BJ (cell line): ENCODE measurements at regions of chr12 and their contacts with region 1.

Region 1: DNA sequence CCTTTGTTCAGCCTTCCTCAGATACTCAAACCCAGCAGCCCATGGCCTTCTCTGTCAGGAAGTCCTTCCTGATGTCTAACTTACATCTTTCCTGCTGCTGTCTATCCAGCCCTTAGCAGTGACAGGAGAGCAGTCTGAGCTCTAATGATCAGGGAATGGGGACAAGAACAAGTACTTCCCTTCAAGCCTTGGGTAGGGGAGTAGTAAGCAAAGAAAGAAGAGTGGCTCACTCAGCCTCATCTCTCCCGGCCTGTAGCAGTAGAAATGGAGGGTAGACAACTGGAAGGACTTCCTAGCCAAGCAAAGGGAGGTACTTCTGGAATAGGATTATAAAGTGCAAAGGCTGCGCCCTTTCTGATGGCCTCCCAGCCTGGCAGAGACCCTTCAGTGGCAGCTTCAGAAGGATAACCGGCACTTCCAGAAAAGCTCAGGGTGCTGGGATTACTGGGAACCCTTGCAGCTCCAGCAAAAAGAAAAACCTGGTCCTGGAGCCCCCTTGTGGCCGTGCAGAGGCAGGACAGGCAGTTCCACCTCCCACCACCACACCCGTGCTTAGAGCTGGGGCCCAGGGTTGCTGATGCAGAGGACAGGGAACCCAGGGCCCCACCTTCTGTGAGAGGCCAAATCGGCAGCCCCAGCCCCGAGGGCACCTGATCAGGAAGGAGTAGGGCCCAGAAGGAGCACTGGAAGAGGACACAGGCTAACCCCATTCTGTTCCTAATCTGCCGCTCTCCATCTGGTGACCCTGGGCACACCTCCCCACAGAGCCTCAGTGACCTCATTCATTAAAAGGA is 12.4 kb upstream of the SMUG1 start:
- DNase-seq: no peak
- H3K4me3 ChIP-seq: no peak overlapping the region
- H3K27me3 ChIP-seq: peaks cover 10% of the 10 kb centered on the region
- CTCF ChIP-seq: peak; percentile 96

Region 2: DNA sequence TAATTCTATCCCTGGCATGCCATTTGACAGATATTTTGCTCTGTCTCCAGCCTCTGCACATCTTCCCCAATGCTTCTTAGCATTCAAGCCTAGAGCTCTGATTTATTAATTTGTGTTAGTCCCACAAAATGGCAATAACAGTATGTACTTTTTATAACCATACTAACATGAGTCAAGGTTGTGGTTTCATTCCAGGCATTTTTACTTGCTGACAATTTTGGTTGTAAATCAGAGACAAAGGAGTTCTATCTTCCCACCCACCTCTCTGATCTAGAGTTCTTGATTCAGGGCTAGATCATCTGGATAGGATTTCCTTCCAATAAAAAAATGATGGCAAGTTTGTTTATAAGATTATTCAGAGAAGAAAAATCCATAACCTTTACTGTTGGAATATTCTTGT is 430.9 kb before region 1 on chr12:
- CTCF ChIA-PET with region 1: interaction called, 10 read pairs
- POLR2A ChIA-PET with region 1: no interaction called
- DNase-seq: peak; percentile 96
- H3K4me3 ChIP-seq: no peak overlapping the region
- H3K27me3 ChIP-seq: no peaks in the 10 kb centered on the region
- CTCF ChIP-seq: no peak

Region 3: DNA sequence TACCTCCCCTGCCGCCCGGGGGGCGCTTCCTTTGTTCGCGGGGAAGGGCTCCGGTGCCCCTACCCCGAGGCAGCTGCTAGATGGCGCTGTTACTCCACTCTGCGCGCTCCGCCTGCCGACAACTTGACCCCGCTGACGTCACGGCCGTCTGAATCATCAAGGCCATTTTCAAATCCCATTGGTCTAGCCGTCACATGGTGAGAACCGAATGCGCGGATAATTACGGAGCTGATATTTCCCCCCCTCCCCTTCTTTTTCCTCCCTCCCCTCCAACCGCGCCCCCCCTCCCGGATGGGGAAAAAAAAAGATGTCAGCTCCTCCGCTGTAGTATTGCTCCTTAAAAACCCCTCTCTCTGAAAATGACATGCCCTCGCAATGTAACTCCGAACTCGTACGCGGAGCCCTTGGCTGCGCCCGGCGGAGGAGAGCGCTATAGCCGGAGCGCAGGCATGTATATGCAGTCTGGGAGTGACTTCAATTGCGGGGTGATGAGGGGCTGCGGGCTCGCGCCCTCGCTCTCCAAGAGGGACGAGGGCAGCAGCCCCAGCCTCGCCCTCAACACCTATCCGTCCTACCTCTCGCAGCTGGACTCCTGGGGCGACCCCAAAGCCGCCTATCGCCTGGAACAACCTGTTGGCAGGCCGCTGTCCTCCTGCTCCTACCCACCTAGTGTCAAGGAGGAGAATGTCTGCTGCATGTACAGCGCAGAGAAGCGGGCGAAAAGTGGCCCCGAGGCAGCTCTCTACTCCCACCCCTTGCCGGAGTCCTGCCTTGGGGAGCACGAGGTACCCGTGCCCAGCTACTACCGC is 216.1 kb before region 1 on chr12 and contains the start of gene HOXC10:
- CTCF ChIA-PET with region 1: interaction called, 90 read pairs
- POLR2A ChIA-PET with region 1: interaction called, 4 read pairs
- DNase-seq: no peak
- H3K4me3 ChIP-seq: peak within 1 kb of the TSS; percentile 60
- H3K27me3 ChIP-seq: peaks cover 2% of the 10 kb centered on the region; the same call in 1 of the 2 replicates
- CTCF ChIP-seq: peak; percentile 83
- polyA plus RNA-seq, gene HOXC10: 13.9 and 14.9 TPM in 2 replicates

Region 4: GRCh38 chr12:54017878-54018467 is 183.2 kb before region 1 on chr12:
- CTCF ChIA-PET with region 1: interaction called, 200 read pairs
- POLR2A ChIA-PET with region 1: no interaction called
- DNase-seq: no peak
- H3K4me3 ChIP-seq: peak overlapping the region; percentile 72
- H3K27me3 ChIP-seq: peaks cover 13% of the 10 kb centered on the region
- CTCF ChIP-seq: no peak